ENCODE measurements at regions of chr6 and their contacts with region 1.

Region 1: DNA sequence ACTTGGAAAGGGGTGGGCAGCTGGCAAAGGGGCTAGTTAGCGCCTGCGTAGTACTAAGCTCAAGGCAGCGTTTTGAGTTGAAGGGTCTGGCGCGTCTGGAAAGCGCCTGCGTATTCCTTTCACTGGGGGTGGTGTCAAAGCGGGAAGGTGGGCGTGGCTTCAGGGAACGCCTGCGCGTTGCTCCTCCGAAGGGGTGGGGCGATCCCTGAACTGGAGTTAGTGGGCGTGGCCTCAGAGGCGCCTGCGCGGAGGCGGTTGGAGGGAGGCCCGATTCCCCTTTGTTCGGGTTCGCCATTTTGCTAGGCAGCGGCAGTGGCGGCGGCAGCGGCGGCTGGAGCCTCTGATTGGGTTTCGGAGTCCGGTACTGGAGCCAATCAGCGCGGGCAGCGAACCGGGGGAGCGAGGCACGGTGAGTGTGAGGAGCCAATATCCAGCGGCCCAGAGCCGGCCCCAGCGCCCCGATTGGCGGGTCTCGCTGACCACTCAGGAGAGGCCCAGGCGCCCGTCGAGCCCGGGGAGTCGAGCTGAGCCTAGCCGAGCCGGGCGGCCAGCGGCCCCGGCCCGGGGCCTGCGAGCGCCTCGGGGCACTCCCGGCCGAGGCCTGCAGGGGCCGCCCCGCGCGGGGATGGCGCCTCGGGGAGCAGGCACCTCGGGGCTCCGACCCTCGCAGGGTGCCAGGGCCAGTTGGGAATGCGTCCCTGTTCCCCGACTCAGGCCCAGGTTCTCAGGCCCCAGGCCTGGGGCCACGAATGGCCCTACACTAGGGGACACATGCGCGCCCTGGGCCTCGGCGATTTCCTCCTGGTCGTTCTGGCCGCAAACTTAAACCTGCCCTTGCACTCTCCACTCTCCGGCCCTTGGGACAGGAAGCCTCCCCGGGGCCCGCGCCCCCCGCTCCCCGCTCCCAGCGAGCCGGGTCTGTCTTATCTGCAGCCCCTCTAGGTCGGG is at the start of gene NFYA:
- DNase-seq: peak; percentile 100
- ATAC-seq: peak; percentile 75
- H3K4me3 Mint-ChIP-seq: peak within 1 kb of the TSS; percentile 94
- H3K27ac Mint-ChIP-seq: peak within 1 kb of the TSS; percentile 98
- H3K4me1 Mint-ChIP-seq: peaks cover 48% of the 10 kb centered on the region
- H3K27me3 Mint-ChIP-seq: no peaks in the 10 kb centered on the region
- total RNA-seq, gene NFYA: 31.5 to 38.2 TPM

Region 2: GRCh38 chr6:39228992-39229767 is 1843.8 kb before region 1 on chr6 and contains the start of gene KCNK5:
- CTCF ChIA-PET with region 1: no interaction called
- POLR2A ChIA-PET with region 1: no interaction called
- intact Hi-C with region 1: loop called (anchors 1 to 5 kb)
- DNase-seq: peak; percentile 94
- ATAC-seq: peak; percentile 93
- H3K4me3 Mint-ChIP-seq: peak within 1 kb of the TSS; percentile 86
- H3K27ac Mint-ChIP-seq: peak within 1 kb of the TSS; percentile 86
- H3K4me1 Mint-ChIP-seq: peaks cover 36% of the 10 kb centered on the region
- H3K27me3 Mint-ChIP-seq: peaks cover 2% of the 10 kb centered on the region
- total RNA-seq, gene KCNK5: 12.7 to 15.8 TPM

Region 3: GRCh38 chr6:41122373-41122772 is 49.4 kb after region 1 on chr6:
- CTCF ChIA-PET with region 1: no interaction called
- POLR2A ChIA-PET with region 1: no interaction called
- intact Hi-C with region 1: no loop called
- DNase-seq: no peak
- ATAC-seq: no peak
- H3K4me3 Mint-ChIP-seq: no peak overlapping the region
- H3K27ac Mint-ChIP-seq: no peak overlapping the region
- H3K4me1 Mint-ChIP-seq: no peaks in the 10 kb centered on the region
- H3K27me3 Mint-ChIP-seq: no peaks in the 10 kb centered on the region

Region 4: DNA sequence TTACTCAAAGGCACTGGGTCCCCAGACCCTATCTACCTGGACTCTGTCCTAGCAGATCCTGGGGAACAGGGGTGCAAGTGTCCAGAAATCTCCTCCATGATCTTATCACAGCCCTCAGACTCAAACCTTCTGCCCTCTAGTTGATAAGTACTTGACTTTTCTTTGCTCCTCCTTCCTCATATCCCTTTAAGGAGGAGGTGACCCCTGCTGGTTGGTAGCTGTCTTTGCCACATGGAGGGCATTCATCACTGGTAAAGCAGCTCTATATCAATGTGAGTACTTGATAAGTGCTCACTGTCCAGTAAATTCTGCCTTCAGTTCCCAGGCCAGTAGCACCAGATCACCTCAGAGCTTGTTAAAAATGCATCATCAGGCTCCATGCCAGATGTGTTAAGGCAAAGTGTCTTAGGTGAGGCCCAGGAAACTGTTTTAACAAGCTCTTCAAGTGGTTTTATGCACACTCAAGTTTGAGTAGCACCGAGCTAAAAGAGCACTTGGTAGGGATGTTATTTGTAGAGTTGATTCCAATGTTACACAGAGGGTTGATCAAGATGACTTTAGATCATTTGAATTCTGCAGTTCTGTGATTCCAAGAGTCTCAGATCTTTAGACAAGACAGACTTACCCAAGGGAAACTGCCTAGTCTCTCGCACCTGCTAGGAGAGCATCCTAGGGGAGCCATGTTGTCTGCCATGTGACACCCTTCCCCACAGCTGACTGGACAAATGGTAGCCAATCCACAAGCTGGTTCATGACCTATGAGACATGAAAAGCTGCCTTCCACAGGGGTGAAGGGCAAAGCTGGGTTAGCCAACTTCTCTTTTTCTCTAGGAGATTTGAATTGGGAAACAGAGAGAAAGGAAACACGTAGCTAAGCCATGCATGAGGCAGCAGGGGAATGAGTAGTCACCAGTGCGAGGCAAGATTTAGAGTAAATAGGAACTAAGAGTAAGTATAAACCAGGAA is 109.4 kb after region 1 on chr6:
- CTCF ChIA-PET with region 1: interaction called, 4 read pairs
- POLR2A ChIA-PET with region 1: no interaction called
- intact Hi-C with region 1: loop called (anchors 5 to 10 kb)
- DNase-seq: peak; percentile 66
- ATAC-seq: peak; percentile 98
- H3K4me3 Mint-ChIP-seq: no peak overlapping the region
- H3K27ac Mint-ChIP-seq: no peak overlapping the region
- H3K4me1 Mint-ChIP-seq: peaks cover 11% of the 10 kb centered on the region
- H3K27me3 Mint-ChIP-seq: no peaks in the 10 kb centered on the region

Region 5: GRCh38 chr6:41318654-41319565 is 246.0 kb after region 1 on chr6:
- CTCF ChIA-PET with region 1: interaction called, 3 read pairs
- POLR2A ChIA-PET with region 1: no interaction called
- intact Hi-C with region 1: loop called (anchors 2 to 5 kb)
- DNase-seq: peak; percentile 91
- ATAC-seq: peak; percentile 95
- H3K4me3 Mint-ChIP-seq: peak overlapping the region; percentile 50
- H3K27ac Mint-ChIP-seq: peak overlapping the region; percentile 72
- H3K4me1 Mint-ChIP-seq: peaks cover 15% of the 10 kb centered on the region
- H3K27me3 Mint-ChIP-seq: peaks cover 9% of the 10 kb centered on the region

Region 6: GRCh38 chr6:41779793-41780545 is 707.0 kb after region 1 on chr6 and contains the start of gene FRS3:
- CTCF ChIA-PET with region 1: no interaction called
- POLR2A ChIA-PET with region 1: no interaction called
- intact Hi-C with region 1: loop called in 1 of 2 experiments (anchors 1 kb)
- DNase-seq: peak; percentile 100
- ATAC-seq: peak; percentile 98
- H3K4me3 Mint-ChIP-seq: peak within 1 kb of the TSS; percentile 85
- H3K27ac Mint-ChIP-seq: peak within 1 kb of the TSS; percentile 75
- H3K4me1 Mint-ChIP-seq: peaks cover 18% of the 10 kb centered on the region
- H3K27me3 Mint-ChIP-seq: peaks cover 7% of the 10 kb centered on the region
- total RNA-seq, gene FRS3: 4.8 to 5.6 TPM

Region 7: GRCh38 chr6:41941280-41942066 is 868.5 kb after region 1 on chr6 and contains the start of gene CCND3:
- CTCF ChIA-PET with region 1: no interaction called
- POLR2A ChIA-PET with region 1: no interaction called
- intact Hi-C with region 1: loop called in 1 of 2 experiments (anchors 5 kb)
- DNase-seq: peak; percentile 96
- ATAC-seq: peak; percentile 79
- H3K4me3 Mint-ChIP-seq: peak within 1 kb of the TSS; percentile 100
- H3K27ac Mint-ChIP-seq: peak within 1 kb of the TSS; percentile 96
- H3K4me1 Mint-ChIP-seq: peaks cover 63% of the 10 kb centered on the region
- H3K27me3 Mint-ChIP-seq: no peaks in the 10 kb centered on the region
- total RNA-seq, gene CCND3: 625 to 806 TPM

Measured in activated CD4-positive, alpha-beta T cell treated with anti-CD3 and anti-CD28 coated beads for 36 hours (primary cell).